Mammary epithelial cell (primary cell): ENCODE measurements at regions of chr19 and their contacts with region 1.

Region 1: DNA sequence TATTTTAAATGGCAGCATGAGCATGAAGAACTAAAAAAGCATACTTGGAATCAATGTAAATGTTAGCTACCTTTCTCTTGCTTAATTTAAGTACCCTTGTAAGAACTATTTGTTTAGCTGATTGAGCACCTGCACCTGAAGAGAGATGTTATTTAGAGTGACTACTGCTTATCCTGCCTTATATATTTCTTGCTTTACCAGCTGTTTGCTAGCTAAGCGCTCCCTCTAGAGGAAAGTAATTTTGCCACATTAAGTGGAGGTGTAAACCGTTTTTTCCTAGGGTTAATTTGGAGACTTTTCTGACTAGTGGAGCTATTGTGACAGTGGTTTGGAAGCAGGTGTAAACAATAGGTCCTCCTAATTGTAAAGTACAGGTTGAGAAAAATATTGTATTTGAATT is 19.4 kb upstream of the PSG2 start:
- DNase-seq: no peak
- H3K4me3 ChIP-seq: no peak overlapping the region
- H3K27ac ChIP-seq: no peak overlapping the region
- H3K4me1 ChIP-seq: no peaks in the 10 kb centered on the region
- H3K27me3 ChIP-seq: no peaks in the 10 kb centered on the region
- CTCF ChIP-seq: peak; percentile 22 to 27

Region 2: DNA sequence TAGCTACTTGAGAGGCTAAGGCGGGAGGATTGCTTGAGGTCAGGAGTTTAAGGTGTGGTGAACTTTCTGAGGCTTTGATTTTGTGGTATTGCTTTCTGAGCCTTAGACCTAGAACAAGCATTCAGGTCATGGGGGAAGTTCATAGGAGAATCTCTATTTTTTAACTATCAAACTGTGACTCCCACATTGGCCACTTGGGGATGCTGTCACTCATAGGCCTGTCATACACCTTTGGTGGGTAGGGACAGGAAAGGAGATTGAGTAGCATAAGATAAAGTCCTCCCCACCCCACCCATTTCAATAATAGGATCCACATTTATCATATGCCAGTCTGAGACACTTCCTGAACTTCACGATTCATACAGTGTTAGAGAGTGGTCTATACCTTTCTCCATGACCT is 22.4 kb after region 1 on chr19:
- CTCF ChIA-PET with region 1: no interaction called
- dilution Hi-C with region 1: no loop called
- in situ Hi-C with region 1: no loop called
- intact Hi-C with region 1: loop called (anchors 1 kb)
- DNase-seq: no peak
- H3K4me3 ChIP-seq: no peak overlapping the region
- H3K27ac ChIP-seq: no peak overlapping the region
- H3K4me1 ChIP-seq: peaks cover 50% of the 10 kb centered on the region
- H3K27me3 ChIP-seq: no peaks in the 10 kb centered on the region
- CTCF ChIP-seq: peak; percentile 36 to 60

Region 3: GRCh38 chr19:43191191-43191590 is 89.2 kb after region 1 on chr19:
- CTCF ChIA-PET with region 1: no interaction called
- dilution Hi-C with region 1: no loop called
- in situ Hi-C with region 1: loop called in 1 of 2 experiments (anchors 10 kb)
- intact Hi-C with region 1: loop called (anchors 1 kb)
- DNase-seq: no peak
- H3K4me3 ChIP-seq: no peak overlapping the region
- H3K27ac ChIP-seq: no peak overlapping the region
- H3K4me1 ChIP-seq: no peaks in the 10 kb centered on the region
- H3K27me3 ChIP-seq: no peaks in the 10 kb centered on the region
- CTCF ChIP-seq: no peak

Region 4: DNA sequence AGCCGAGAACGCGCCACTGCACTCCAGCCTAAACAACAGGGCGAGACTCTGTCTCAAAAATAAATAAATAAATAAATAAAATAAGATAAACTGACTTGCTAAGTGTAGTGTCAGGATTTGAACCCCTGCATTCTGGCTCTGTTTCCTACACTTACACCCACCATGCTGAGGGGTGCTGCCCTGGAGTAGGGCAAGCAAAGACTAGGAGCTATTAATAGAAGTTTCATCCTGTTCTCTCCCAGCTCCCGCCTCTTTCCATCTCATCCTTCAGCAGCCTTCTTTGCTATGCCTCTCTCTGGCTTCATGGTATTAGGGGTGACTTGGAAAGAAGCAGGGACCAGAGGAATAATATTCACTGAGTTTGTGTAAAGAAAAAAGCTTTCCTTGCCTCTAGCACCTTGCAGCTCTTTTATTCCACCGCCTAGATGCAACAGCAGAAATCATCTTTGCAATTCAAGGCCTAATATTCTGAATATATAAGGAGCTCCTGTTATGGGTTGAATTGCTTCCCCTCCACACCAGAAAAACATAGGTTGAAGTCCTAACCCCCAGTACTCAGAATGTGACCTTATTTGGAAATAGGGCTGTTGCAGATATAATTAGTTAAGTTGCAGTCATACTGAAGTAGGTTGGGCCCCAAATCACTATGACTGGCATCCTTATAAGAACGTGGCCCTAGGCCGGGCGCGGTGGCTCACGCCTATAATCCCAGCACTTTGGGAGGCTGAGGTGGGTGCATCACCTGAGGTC is 576.7 kb after region 1 on chr19:
- CTCF ChIA-PET with region 1: no interaction called
- dilution Hi-C with region 1: no loop called
- in situ Hi-C with region 1: no loop called
- intact Hi-C with region 1: no loop called
- DNase-seq: no peak
- H3K4me3 ChIP-seq: no peak overlapping the region
- H3K27ac ChIP-seq: no peak overlapping the region
- H3K4me1 ChIP-seq: peaks cover 17% of the 10 kb centered on the region
- H3K27me3 ChIP-seq: no peaks in the 10 kb centered on the region
- CTCF ChIP-seq: no peak